Right cardiac atrium (tissue), 5 donors: ENCODE measurements at regions of chr2 and their contacts with region 1.

Region 1: GRCh38 chr2:120174963-120175581 is 48.1 kb downstream of the TMEM185B start:
- DNase-seq: no peak
- ATAC-seq: peak; percentile 20 to 59
- H3K4me3 ChIP-seq: no peak overlapping the region
- H3K27ac ChIP-seq: no peak overlapping the region
- H3K4me1 ChIP-seq: no peaks in the 10 kb centered on the region
- H3K27me3 ChIP-seq: no peaks in the 10 kb centered on the region

Region 2: GRCh38 chr2:119702918-119703401 is 472.1 kb before region 1 on chr2:
- intact Hi-C with region 1: loop called in 1 of 4 experiments (anchors 10 kb)
- DNase-seq: peak; percentile 46 to 78 (median 68)
- ATAC-seq: peak; percentile 86 to 91
- H3K4me3 ChIP-seq: no peak overlapping the region
- H3K27ac ChIP-seq: no peak overlapping the region
- H3K4me1 ChIP-seq: no peaks in the 10 kb centered on the region
- H3K27me3 ChIP-seq: no peaks in the 10 kb centered on the region

Region 3: GRCh38 chr2:119744298-119744939 is 430.7 kb before region 1 on chr2:
- intact Hi-C with region 1: loop called in 1 of 4 experiments (anchors 10 kb)
- DNase-seq: no peak
- ATAC-seq: peak in 1 of 2 donors; percentile 43
- H3K4me3 ChIP-seq: no peak overlapping the region
- H3K27ac ChIP-seq: no peak overlapping the region
- H3K4me1 ChIP-seq: no peaks in the 10 kb centered on the region
- H3K27me3 ChIP-seq: no peaks in the 10 kb centered on the region

Region 4: GRCh38 chr2:119759451-119760236 is 415.4 kb before region 1 on chr2 and contains the start of gene PTPN4:
- intact Hi-C with region 1: loop called in 1 of 4 experiments (anchors 10 kb)
- DNase-seq: peak; percentile 97 to 99 (median 99)
- ATAC-seq: peak; percentile 99
- H3K4me3 ChIP-seq: peak within 1 kb of the TSS; percentile 97
- H3K27ac ChIP-seq: peak within 1 kb of the TSS; percentile 98
- H3K4me1 ChIP-seq: no peaks in the 10 kb centered on the region
- H3K27me3 ChIP-seq: no peaks in the 10 kb centered on the region
- total RNA-seq, gene PTPN4: 28.4 to 42.6 (median 38.7) TPM

Region 5: GRCh38 chr2:120109186-120110061 is 65.6 kb before region 1 on chr2:
- intact Hi-C with region 1: loop called in 1 of 4 experiments (anchors 10 kb)
- DNase-seq: no peak
- ATAC-seq: peak; percentile 48 to 53
- H3K4me3 ChIP-seq: no peak overlapping the region
- H3K27ac ChIP-seq: no peak overlapping the region
- H3K4me1 ChIP-seq: no peaks in the 10 kb centered on the region
- H3K27me3 ChIP-seq: no peaks in the 10 kb centered on the region

Region 6: GRCh38 chr2:120396013-120396885 is 221.2 kb after region 1 on chr2:
- intact Hi-C with region 1: no loop called
- DNase-seq: no peak
- ATAC-seq: no peak
- H3K4me3 ChIP-seq: no peak overlapping the region
- H3K27ac ChIP-seq: no peak overlapping the region
- H3K4me1 ChIP-seq: no peaks in the 10 kb centered on the region
- H3K27me3 ChIP-seq: no peaks in the 10 kb centered on the region

Region 7: DNA sequence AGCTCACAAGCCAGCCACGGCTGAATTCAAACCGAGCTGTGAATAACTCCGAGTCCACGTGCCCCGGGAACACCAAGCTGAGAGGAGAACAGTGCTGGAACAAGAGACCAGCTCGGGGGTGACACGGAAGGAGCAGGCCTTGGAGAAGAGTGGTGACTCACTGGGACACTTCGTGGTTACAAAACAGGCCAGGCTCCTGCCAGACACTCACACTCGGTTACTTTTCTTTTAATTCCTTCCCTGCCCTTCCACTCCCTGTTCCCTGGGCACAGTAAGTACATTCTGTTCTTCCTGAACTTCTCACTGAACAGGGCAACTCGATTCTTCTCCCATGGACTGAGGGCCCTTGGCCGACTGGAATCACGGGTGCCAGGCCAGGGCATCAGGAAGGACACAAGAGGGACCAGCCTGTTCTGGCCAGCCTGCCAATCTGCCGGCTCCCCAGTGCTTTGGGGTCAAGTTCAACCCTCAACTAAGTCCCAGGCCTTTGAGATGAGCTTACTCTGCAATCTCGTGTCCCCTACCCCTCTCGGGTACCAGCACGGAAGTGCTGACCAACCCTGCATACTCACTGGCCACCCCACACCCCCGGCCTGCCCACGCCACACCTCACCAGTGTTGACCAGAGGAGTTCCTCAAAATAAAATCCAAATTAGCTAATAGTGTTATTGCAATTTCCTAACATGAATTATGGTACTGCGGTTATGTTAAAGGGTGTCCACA is 1022.5 kb after region 1 on chr2:
- intact Hi-C with region 1: no loop called
- DNase-seq: peak; percentile 81 to 90 (median 87)
- ATAC-seq: peak; percentile 92
- H3K4me3 ChIP-seq: no peak overlapping the region
- H3K27ac ChIP-seq: peak overlapping the region; percentile 36
- H3K4me1 ChIP-seq: no peaks in the 10 kb centered on the region
- H3K27me3 ChIP-seq: no peaks in the 10 kb centered on the region